Activated T-helper 2 cell treated with anti-CD3 and anti-CD28 coated beads, Interferon-gamma antibody, Interleukin-2, Interleukin-4, amounts not matched to agents 10 μg/mL and 5 μg/mL and 100 μg/mL, durations not matched to agents 14 hours and 24 hours and 36 hours (primary cell): ENCODE measurements at regions of chr19 and their contacts with region 1.

Region 1: GRCh38 chr19:16771618-16772017 is 52.0 kb downstream of the NWD1 start:
- DNase-seq: peak; percentile 62
- H3K4me3 Mint-ChIP-seq: no peak overlapping the region
- H3K27ac Mint-ChIP-seq: no peak overlapping the region
- H3K4me1 Mint-ChIP-seq: no peaks in the 10 kb centered on the region
- H3K27me3 Mint-ChIP-seq: peaks cover 8% of the 10 kb centered on the region

Region 2: GRCh38 chr19:16561382-16561781 is 210.2 kb before region 1 on chr19:
- intact Hi-C with region 1: no loop called
- DNase-seq: no peak
- H3K4me3 Mint-ChIP-seq: no peak overlapping the region
- H3K27ac Mint-ChIP-seq: no peak overlapping the region
- H3K4me1 Mint-ChIP-seq: peaks cover 11% of the 10 kb centered on the region
- H3K27me3 Mint-ChIP-seq: no peaks in the 10 kb centered on the region

Region 3: DNA sequence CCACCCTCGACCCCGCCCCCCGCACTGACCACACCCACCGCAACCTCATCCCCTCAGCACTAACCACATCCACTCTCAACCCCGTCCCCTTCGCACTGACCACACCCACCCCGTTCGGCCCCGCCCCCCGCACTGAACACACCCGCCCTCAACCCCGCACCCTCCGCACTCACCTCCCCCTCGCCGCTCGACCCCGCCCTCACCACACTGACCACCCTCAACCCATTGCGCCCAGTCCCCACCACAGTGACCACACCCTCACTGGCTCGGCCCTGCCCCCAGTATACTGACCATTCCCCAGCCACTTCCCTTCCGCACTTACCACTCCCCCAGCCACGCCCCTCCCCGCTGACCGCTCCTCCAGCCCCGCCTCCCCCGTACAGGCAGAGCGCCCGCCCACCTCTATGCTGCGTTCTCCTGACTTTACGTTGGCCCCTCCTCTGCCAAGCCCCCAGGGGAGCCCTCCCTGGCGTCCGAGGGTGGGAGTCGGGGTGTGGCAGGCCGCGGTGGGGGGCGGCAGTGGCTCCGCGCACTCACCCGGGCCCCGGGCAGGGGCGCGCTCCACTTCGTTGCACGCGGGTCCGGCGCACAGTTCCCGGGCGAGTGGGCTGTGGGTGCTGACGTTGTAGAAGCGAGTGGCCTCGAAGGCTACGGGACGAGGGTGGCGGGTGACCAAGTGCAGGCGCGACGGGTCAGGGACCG is 125.7 kb after region 1 on chr19:
- intact Hi-C with region 1: loop called (anchors 2 kb)
- DNase-seq: peak; percentile 67
- H3K4me3 Mint-ChIP-seq: peak overlapping the region; percentile 64
- H3K27ac Mint-ChIP-seq: no peak overlapping the region
- H3K4me1 Mint-ChIP-seq: peaks cover 25% of the 10 kb centered on the region
- H3K27me3 Mint-ChIP-seq: peaks cover 25% of the 10 kb centered on the region

Region 4: DNA sequence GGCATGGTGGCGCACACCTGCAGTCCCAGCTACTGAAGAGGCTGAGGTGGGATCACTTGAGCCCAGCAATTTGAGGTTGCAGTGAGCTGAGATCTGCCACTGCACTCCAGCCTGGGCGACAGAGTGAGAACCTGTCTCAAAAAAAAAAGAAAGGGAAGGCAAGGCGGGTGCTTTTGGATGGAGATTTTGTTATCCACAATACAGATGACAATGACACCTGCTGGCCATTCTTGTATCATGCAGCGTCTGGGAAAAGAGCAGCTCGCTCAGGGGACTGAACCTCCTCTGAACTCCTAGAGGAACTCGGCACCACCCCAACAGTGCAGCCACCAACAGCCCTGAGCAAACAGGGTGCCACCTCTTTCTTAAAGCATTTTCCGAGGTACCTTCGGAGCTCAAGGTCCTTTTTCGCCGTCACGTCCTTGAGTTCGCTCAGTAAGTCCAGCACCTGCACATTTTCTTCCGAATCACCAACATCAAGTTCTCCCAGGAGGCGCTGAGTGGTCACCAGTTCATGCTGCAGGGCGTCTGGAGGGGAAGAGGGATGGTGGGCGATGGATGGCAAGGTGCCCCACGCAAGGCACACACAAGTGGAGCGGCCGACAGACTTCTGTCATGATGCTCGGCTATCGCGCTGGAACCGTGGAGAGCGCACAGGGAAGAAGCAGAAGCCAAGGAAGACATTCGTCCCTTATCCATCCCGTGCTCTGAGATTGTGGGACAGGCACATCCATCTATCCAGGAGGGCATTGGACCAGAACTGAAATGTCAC is 281.0 kb after region 1 on chr19:
- intact Hi-C with region 1: loop called (anchors 5 kb)
- DNase-seq: no peak
- H3K4me3 Mint-ChIP-seq: no peak overlapping the region
- H3K27ac Mint-ChIP-seq: no peak overlapping the region
- H3K4me1 Mint-ChIP-seq: no peaks in the 10 kb centered on the region
- H3K27me3 Mint-ChIP-seq: no peaks in the 10 kb centered on the region